K562 (cell line): ENCODE measurements at regions of chr6 and their contacts with region 1.

Region 1: GRCh38 chr6:139764498-139764986 is 390.1 kb upstream of the CITED2 start:
- DNase-seq: peak; percentile 36 to 73 (median 54)
- ATAC-seq: peak; percentile 83
- H3K4me3 ChIP-seq: no peak overlapping the region
- H3K27ac ChIP-seq: peak overlapping the region; percentile 12; the same call in 2 of the 3 replicates
- H3K4me1 ChIP-seq: peaks cover 0 to 32% of the 10 kb centered on the region in 2 experiments; a peak in 4 of 5 replicates
- H3K27me3 ChIP-seq: no peaks in the 10 kb centered on the region
- CTCF ChIP-seq: no peak
- EP300 ChIP-seq: peak; percentile 6; the same call in 1 of the 2 replicates
- POLR2A ChIP-seq: no peak
- RAD21 ChIP-seq: 0 out of 4 replicates have a peak, but pooled peaks of 1 of the 2 experiments have one; percentile 26

Region 2: DNA sequence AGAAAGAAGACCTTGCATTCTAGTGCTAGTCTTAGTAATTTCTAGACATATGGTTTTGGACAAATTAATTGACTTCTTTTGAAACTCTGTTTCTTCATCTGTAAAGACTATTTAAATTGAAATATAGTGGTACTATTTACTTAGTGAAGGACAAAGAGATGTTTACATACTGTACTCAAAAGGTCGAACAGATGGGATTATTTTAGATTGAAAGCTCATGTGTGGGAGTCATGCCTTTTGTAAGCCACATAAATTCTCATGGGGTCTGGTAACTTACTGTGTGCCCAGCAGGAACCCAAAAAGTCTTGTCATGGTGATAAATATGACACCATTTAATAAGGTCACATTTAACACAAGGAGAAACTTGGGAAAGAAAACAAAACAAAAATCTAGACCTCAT is 21.9 kb before region 1 on chr6:
- CTCF ChIA-PET with region 1: no interaction called
- POLR2A ChIA-PET with region 1: no interaction called
- in situ Hi-C with region 1: no loop called
- intact Hi-C with region 1: no loop called
- DNase-seq: no peak
- ATAC-seq: no peak
- H3K4me3 ChIP-seq: no peak overlapping the region
- H3K27ac ChIP-seq: no peak overlapping the region
- H3K4me1 ChIP-seq: no peaks in the 10 kb centered on the region
- H3K27me3 ChIP-seq: no peaks in the 10 kb centered on the region
- CTCF ChIP-seq: no peak
- EP300 ChIP-seq: no peak
- POLR2A ChIP-seq: no peak
- RAD21 ChIP-seq: no peak

Region 3: DNA sequence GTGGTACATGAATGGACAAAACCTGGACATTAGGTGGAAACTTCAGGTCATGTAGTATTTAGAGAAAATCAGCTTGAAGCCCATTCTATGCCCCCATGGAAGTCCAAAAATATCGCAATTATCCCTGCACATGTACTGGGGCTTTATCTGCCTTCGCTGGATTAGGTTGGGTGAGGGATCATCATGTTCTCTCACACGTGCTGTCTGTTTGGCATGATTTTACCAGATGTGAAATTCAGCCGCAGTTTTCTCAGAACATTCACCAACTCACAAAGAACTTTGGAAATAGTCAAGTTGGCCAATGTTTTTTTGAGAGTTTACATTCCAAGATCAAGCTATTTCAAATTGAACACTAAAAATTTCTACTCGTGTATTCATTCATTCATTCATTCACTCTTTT is 69.7 kb after region 1 on chr6:
- CTCF ChIA-PET with region 1: no interaction called
- POLR2A ChIA-PET with region 1: no interaction called
- in situ Hi-C with region 1: no loop called
- intact Hi-C with region 1: loop called (anchors 2 kb)
- DNase-seq: no peak
- ATAC-seq: no peak
- H3K4me3 ChIP-seq: no peak overlapping the region
- H3K27ac ChIP-seq: no peak overlapping the region
- H3K4me1 ChIP-seq: no peaks in the 10 kb centered on the region; a peak in 1 of 5 replicates
- H3K27me3 ChIP-seq: no peaks in the 10 kb centered on the region
- CTCF ChIP-seq: no peak
- EP300 ChIP-seq: no peak
- POLR2A ChIP-seq: no peak
- RAD21 ChIP-seq: no peak